H1 (cell line): ENCODE measurements at regions of chr21 and their contacts with region 1.

Region 1: DNA sequence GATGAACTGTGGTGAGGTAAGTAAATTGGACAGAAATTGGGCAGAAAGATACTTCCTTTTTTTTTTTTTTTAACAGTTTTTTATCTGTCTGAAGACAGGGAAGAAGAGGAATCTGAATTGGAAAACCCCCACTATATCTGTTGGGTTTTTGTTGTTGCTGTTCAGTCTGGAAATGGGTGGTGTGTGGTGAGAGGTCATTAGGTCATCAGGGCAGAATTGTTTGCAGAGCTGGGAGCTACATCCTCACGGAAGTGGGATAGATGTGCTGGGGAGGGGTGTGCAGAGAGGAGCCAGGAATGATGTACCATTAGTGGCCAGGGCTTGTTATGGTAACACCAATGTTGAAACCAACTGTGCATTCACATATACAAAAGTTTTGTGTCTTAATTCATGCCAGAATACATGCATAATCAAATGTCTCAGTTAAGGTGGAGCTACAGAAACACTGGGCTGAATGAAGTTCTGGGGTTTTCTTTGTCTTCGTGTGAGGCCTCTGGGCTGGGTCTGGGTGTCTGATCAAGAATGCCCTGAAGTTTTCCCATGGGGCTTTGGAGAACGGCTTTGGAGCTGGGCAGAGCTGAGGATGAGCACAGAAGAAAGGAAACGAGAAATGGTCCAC is 12.4 kb downstream of the USP25 start:
- DNase-seq: no peak
- H3K4me3 ChIP-seq: no peak overlapping the region
- H3K27ac ChIP-seq: no peak overlapping the region
- H3K4me1 ChIP-seq: peaks cover 4 to 33% (median 13%) of the 10 kb centered on the region in 4 experiments
- H3K27me3 ChIP-seq: no peaks in the 10 kb centered on the region
- CTCF ChIP-seq: no peak
- EP300 ChIP-seq: no peak
- POLR2A ChIP-seq: no peak
- RAD21 ChIP-seq: no peak

Region 2: DNA sequence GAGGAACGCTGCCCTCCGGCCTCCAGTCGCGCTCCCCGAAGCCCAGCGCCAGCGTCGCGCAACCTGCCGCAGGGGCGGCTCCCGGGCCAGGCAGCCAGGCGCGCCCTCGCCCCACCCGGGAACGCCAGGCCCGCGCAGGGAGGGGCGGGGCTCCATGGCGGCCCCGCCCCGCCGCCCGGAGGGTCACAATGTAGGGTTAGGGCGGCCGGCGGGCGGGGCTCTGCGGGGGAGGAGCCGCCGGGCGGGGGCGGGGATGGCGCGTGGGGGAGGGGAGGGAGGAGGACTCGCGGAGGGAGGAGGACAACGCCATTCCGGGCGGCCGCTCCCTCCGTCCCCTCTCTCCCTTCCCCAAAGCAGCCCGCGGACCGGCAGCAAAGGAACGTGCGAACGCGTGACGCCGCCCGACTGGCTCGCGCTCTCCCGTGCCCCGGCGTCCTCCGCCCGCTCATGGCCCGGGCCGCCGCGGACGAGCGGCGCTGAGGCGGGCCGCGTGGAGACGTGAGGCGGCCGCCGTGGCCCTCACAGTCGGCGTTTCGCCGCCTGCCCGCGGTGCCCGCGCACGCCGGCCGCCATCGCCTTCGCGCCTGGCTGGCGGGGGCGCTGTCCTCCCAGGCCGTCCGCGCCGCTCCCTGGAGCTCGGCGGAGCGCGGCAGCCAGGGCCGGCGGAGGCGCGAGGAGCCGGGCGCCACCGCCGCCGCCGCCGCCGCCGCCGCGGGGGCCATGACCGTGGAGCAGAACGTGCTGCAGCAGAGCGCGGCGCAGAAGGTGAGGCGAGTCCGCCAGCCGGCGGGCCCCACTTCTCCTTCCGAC is 12.3 kb before region 1 on chr21 and contains the start of gene USP25:
- CTCF ChIA-PET with region 1: interaction called, 3 read pairs
- POLR2A ChIA-PET with region 1: interaction called, 24 read pairs
- DNase-seq: peak; percentile 57 to 88
- H3K4me3 ChIP-seq: peak within 1 kb of the TSS; percentile 78 to 98 (median 90)
- H3K27ac ChIP-seq: peak within 1 kb of the TSS; percentile 80; the same call in 1 of the 2 replicates
- H3K4me1 ChIP-seq: peaks cover 0 to 2% (median 0%) of the 10 kb centered on the region in 4 experiments; a peak in 2 of 7 replicates
- H3K27me3 ChIP-seq: no peaks in the 10 kb centered on the region; a peak in 2 of 7 replicates
- CTCF ChIP-seq: peak in 2 of 3 experiments; percentile 6 to 36; a peak in 2 of 4 replicates
- EP300 ChIP-seq: peak in 1 of 2 experiments; percentile 3; a peak in 1 of 3 replicates
- POLR2A ChIP-seq: peak; percentile 79 to 86
- RAD21 ChIP-seq: peak in 1 of 2 experiments; percentile 28; a peak in 1 of 4 replicates
- total RNA-seq, gene USP25: 43.6 and 48.1 TPM in 2 replicates

Region 3: GRCh38 chr21:15809818-15810217 is 67.7 kb after region 1 on chr21:
- CTCF ChIA-PET with region 1: no interaction called
- POLR2A ChIA-PET with region 1: no interaction called
- DNase-seq: no peak
- H3K4me3 ChIP-seq: no peak overlapping the region
- H3K27ac ChIP-seq: no peak overlapping the region
- H3K4me1 ChIP-seq: no peaks in the 10 kb centered on the region; a peak in 2 of 7 replicates
- H3K27me3 ChIP-seq: no peaks in the 10 kb centered on the region
- CTCF ChIP-seq: no peak
- EP300 ChIP-seq: no peak
- POLR2A ChIP-seq: no peak
- RAD21 ChIP-seq: no peak